ENCODE measurements at regions of chr3 and their contacts with region 1.

Region 1: DNA sequence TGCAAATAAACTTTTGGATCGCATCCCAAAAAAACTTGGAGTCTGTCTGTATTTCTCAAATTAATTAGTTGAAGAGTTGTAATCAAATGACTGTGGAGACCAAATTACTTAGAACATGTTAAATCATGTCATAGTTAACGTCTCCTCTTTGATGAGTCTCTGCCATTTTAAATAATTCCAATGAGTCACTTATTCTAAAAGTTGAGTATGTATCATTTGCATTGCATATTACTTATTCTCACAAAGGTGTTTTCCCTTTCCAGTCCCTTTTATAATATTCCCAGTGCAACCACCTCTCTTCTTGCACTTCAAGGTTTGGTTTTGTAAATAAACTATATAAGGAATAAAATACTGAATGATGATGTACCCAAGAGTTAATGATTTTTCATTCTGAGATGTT is 36.0 kb upstream of the MBNL1 start:
- DNase-seq: no peak
- H3K4me3 Mint-ChIP-seq: peak overlapping the region; percentile 34
- H3K27ac Mint-ChIP-seq: peak overlapping the region; percentile 80
- H3K4me1 Mint-ChIP-seq: peaks cover 76% of the 10 kb centered on the region
- H3K27me3 Mint-ChIP-seq: no peaks in the 10 kb centered on the region

Region 2: DNA sequence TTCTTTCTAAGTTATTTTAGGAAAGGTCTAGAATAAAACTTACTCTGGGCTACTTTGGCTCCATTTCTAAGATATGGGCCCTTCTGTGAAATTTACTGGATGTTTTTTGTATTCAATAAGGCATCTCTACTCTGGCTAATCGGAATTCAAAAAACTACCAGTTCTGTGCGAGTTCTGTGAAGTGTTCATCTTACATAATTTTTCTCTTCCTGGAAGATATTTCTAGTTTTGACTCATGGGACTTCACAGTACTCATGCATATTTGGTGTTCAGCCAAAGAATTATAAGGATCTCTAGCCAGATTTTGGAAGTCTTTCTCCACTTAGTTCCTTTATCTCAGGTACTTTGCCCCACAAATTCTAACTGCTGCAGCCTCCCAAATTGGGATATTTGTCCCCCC is 10.4 kb before region 1 on chr3:
- CTCF ChIA-PET with region 1: no interaction called
- POLR2A ChIA-PET with region 1: interaction called, 4 read pairs
- intact Hi-C with region 1: loop called (anchors 1 kb)
- DNase-seq: no peak
- H3K4me3 Mint-ChIP-seq: peak overlapping the region; percentile 42
- H3K27ac Mint-ChIP-seq: peak overlapping the region; percentile 77
- H3K4me1 Mint-ChIP-seq: peaks cover 72% of the 10 kb centered on the region
- H3K27me3 Mint-ChIP-seq: no peaks in the 10 kb centered on the region